Mammary epithelial cell (primary cell): ENCODE measurements at regions of chr16 and their contacts with region 1.

Region 1: DNA sequence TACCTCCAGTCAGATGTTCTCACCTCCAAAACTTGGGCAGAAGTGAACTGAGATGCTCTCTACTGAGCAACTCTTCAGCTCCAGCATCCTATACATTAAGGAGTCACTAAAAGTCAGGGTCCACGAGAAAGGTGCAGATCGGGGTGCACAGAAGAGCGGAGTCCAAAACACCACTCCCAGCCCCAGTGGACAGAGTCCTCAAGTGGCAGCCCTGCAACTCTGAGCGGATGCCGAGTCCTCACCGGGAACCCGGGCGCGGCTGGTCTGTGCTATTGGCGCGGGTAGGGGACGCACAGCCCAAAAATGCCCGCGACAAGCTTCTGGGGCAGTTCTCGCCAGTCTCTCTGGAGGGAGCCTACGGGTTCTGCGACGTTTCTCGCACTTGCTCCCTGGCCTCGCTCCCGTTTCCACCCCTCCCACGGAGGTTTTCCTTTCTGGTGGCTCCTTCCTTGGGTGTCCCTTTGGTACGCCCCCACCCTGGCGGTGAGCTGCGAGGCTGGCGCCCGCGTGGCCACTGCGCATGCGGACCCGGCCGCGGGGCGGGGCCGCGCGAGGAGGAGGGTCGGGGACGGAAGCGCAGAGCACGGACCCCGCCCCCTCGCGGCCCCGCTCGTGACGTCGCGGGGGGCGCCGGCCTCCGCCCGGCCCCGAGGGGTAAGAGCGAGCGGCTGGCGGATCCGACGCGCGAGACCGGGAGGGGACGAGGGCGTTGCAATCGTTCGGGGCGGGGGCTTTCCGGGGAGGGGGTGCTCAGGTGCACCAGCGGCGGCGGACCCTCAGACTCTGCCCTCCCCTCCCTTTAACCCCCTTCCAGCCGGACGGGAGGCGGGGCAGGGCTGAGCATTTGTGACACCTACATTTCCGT is at the start of gene TMEM219:
- DNase-seq: peak; percentile 76
- H3K4me3 ChIP-seq: peak within 1 kb of the TSS; percentile 67 to 78 (median 73)
- H3K27ac ChIP-seq: peak within 1 kb of the TSS; percentile 50
- H3K4me1 ChIP-seq: peaks cover 17% of the 10 kb centered on the region
- H3K27me3 ChIP-seq: no peaks in the 10 kb centered on the region
- CTCF ChIP-seq: peak; percentile 8 to 47
- total RNA-seq, gene TMEM219: 65.6 to 65.7 TPM

Region 2: GRCh38 chr16:28950648-28951409 is 1010.9 kb before region 1 on chr16 and contains the start of gene NFATC2IP:
- CTCF ChIA-PET with region 1: no interaction called
- dilution Hi-C with region 1: loop called (anchors 25 kb)
- in situ Hi-C with region 1: no loop called
- intact Hi-C with region 1: no loop called
- DNase-seq: peak; percentile 100
- H3K4me3 ChIP-seq: peak within 1 kb of the TSS; percentile 76 to 95 (median 89)
- H3K27ac ChIP-seq: peak within 1 kb of the TSS; percentile 55
- H3K4me1 ChIP-seq: peaks cover 16% of the 10 kb centered on the region
- H3K27me3 ChIP-seq: no peaks in the 10 kb centered on the region
- CTCF ChIP-seq: no peak
- total RNA-seq, gene NFATC2IP: 21.5 to 59.2 TPM

Region 3: GRCh38 chr16:29900102-29900887 is 61.4 kb before region 1 on chr16 and contains the start of gene ASPHD1:
- CTCF ChIA-PET with region 1: interaction called, 28 read pairs
- dilution Hi-C with region 1: no loop called
- in situ Hi-C with region 1: no loop called
- intact Hi-C with region 1: loop called (anchors 1 kb)
- DNase-seq: peak; percentile 84
- H3K4me3 ChIP-seq: peak within 1 kb of the TSS; percentile 61 to 70 (median 68)
- H3K27ac ChIP-seq: no peak within 1 kb of the TSS
- H3K4me1 ChIP-seq: peaks cover 21% of the 10 kb centered on the region
- H3K27me3 ChIP-seq: peaks cover 4% of the 10 kb centered on the region
- CTCF ChIP-seq: no peak
- total RNA-seq, gene ASPHD1: 1.5 to 14.7 TPM

Region 4: DNA sequence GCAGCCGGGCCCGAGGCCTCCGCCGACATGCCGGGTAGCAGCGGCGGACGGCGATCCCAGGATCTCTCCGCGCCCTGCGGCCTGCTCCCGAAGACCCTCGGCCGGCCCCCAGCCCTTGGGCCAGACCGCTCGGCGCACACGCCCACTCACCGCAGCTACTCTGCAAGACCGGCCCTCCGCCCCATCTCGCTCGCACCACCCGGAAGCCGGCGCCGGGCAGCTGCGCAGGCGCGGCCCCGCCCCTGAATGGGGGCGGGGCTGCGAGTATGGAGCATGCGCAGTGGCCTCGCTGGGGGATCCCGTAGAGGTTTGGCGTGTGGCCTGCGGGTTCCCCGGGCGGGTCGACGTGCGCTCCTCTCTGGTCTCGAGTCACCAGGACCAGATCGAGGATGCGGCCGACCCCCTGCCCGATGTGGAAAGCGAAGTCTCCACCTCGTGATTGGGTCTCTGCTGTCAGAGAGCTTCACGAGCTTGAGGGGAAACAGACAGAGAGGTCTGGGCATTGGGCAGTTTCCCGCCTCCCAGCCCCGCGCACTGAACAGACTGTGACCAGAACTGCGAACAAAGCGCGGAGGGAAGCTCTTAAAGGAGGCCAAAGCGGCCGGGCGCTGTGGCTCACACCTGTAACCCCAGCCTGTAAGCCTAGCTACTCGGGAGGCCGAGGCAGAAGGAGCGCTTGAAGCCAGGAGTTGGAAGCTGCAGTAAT is 35.6 kb before region 1 on chr16 and contains the start of gene KCTD13:
- CTCF ChIA-PET with region 1: interaction called, 19 read pairs
- dilution Hi-C with region 1: no loop called
- in situ Hi-C with region 1: no loop called
- intact Hi-C with region 1: loop called (anchors 2 kb)
- DNase-seq: peak; percentile 80
- H3K4me3 ChIP-seq: peak within 1 kb of the TSS; percentile 40 to 98 (median 89)
- H3K27ac ChIP-seq: peak within 1 kb of the TSS; percentile 63
- H3K4me1 ChIP-seq: peaks cover 10% of the 10 kb centered on the region
- H3K27me3 ChIP-seq: no peaks in the 10 kb centered on the region
- CTCF ChIP-seq: no peak
- total RNA-seq, gene KCTD13: 11.8 to 27.4 TPM

Region 5: GRCh38 chr16:30032083-30032819 is 70.5 kb after region 1 on chr16:
- CTCF ChIA-PET with region 1: no interaction called
- dilution Hi-C with region 1: loop called (anchors 5 kb)
- in situ Hi-C with region 1: no loop called
- intact Hi-C with region 1: no loop called
- DNase-seq: peak; percentile 44
- H3K4me3 ChIP-seq: no peak overlapping the region
- H3K27ac ChIP-seq: no peak overlapping the region
- H3K4me1 ChIP-seq: no peaks in the 10 kb centered on the region
- H3K27me3 ChIP-seq: peaks cover 4% of the 10 kb centered on the region
- CTCF ChIP-seq: peak; percentile 68 to 80

Region 6: GRCh38 chr16:30370444-30371247 is 408.9 kb after region 1 on chr16 and contains the start of gene TBC1D10B:
- CTCF ChIA-PET with region 1: no interaction called
- dilution Hi-C with region 1: loop called (anchors 25 kb)
- in situ Hi-C with region 1: no loop called
- intact Hi-C with region 1: no loop called
- DNase-seq: peak; percentile 100
- H3K4me3 ChIP-seq: peak within 1 kb of the TSS; percentile 74 to 79 (median 75)
- H3K27ac ChIP-seq: peak within 1 kb of the TSS; percentile 36
- H3K4me1 ChIP-seq: peaks cover 13% of the 10 kb centered on the region
- H3K27me3 ChIP-seq: no peaks in the 10 kb centered on the region
- CTCF ChIP-seq: peak in 1 of 2 donors; percentile 36
- total RNA-seq, gene TBC1D10B: 27.3 to 45.5 TPM